HepG2 (cell line): ENCODE measurements at regions of chr13 and their contacts with region 1.

Region 1: DNA sequence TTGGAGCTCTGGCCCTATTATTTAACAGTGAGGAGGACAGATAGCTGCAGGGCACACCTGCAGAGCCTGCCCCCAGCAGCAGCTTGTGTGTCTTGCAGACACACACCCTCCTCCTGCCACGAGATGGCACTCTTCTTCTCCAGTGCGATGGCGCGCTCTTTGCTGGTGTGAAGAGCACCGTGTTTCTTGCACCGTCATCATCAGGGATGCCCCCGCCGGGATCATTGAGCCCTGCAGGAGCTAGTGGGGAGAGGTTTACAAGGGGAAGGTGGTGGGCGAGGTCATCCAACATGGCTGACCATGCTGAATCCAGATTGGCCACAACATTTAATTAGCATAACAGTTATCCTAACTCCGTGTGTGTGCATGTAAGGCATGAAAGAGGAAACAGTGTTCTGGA is 105.6 kb downstream of the RAB20 start:
- DNase-seq: peak; percentile 79
- ATAC-seq: peak; percentile 96
- H3K4me3 ChIP-seq: no peak overlapping the region
- H3K27ac ChIP-seq: no peak overlapping the region
- H3K4me1 ChIP-seq: peaks cover 41% of the 10 kb centered on the region
- H3K27me3 ChIP-seq: peaks cover 0 to 31% of the 10 kb centered on the region in 2 experiments; a peak in 3 of 5 replicates
- CTCF ChIP-seq: peak; percentile 97
- EP300 ChIP-seq: no peak
- POLR2A ChIP-seq: no peak
- RAD21 ChIP-seq: peak; percentile 92

Region 2: DNA sequence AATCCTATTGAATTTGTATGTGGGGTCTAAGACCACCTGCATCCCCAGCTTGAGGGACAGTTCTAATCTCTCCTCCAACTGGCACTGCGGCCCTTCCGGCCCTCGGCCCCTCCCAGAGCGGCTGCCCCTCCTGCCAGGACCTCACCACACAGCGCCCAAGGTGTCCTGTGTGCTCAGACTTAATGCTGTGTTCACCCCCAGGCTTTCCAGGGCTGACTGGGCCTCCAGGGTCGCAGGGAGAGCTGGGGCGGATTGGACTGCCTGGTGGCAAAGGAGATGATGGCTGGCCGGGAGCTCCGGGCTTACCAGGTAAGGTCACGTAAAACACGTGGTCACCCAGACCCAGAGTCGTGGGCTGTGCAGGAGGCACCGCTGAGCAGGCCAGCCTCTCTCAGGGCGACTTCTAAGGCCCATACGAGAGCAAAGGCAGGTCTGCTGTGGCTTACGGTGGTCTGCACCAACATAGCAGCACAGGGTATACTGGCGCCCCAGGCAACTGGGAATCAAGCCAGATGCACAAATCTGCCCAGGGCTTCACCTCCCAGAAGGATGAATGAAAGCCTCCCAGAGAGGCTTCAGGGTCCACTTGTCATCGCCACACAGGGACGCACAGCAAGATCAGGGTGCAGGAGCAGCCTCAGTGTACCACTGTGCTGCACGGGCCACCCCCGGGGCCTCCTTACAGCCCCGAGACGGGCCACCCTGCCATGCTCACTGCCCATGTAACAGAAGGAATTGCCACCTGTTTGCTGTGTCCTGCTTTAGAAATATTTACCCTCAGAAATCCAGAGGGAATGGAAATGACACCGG is 36.1 kb after region 1 on chr13:
- CTCF ChIA-PET with region 1: no interaction called
- POLR2A ChIA-PET with region 1: no interaction called
- in situ Hi-C with region 1: no loop called
- intact Hi-C with region 1: loop called (anchors 1 kb)
- DNase-seq: no peak
- ATAC-seq: no peak
- H3K4me3 ChIP-seq: no peak overlapping the region
- H3K27ac ChIP-seq: no peak overlapping the region
- H3K4me1 ChIP-seq: peaks cover 53% of the 10 kb centered on the region
- H3K27me3 ChIP-seq: no peaks in the 10 kb centered on the region
- CTCF ChIP-seq: no peak
- EP300 ChIP-seq: no peak
- POLR2A ChIP-seq: no peak
- RAD21 ChIP-seq: no peak

Region 3: GRCh38 chr13:110555601-110556223 is 99.8 kb after region 1 on chr13:
- CTCF ChIA-PET with region 1: no interaction called
- POLR2A ChIA-PET with region 1: no interaction called
- in situ Hi-C with region 1: loop called (anchors 5 kb)
- intact Hi-C with region 1: loop called (anchors 2 kb)
- DNase-seq: peak; percentile 84
- ATAC-seq: peak; percentile 90
- H3K4me3 ChIP-seq: peak overlapping the region in 1 of 3 experiments; percentile 31; a peak in 1 of 6 replicates
- H3K27ac ChIP-seq: peak overlapping the region; percentile 39
- H3K4me1 ChIP-seq: peaks cover 89% of the 10 kb centered on the region
- H3K27me3 ChIP-seq: no peaks in the 10 kb centered on the region
- CTCF ChIP-seq: no peak
- EP300 ChIP-seq: 0 out of 4 replicates have a peak, but pooled peaks of 1 of the 2 experiments have one; percentile 32
- POLR2A ChIP-seq: no peak
- RAD21 ChIP-seq: no peak

Region 4: GRCh38 chr13:110593430-110594130 is 137.6 kb after region 1 on chr13:
- CTCF ChIA-PET with region 1: interaction called, 5 read pairs
- POLR2A ChIA-PET with region 1: no interaction called
- in situ Hi-C with region 1: no loop called
- intact Hi-C with region 1: loop called (anchors 10 kb)
- DNase-seq: peak; percentile 65
- ATAC-seq: peak; percentile 89
- H3K4me3 ChIP-seq: no peak overlapping the region
- H3K27ac ChIP-seq: no peak overlapping the region
- H3K4me1 ChIP-seq: peaks cover 19% of the 10 kb centered on the region
- H3K27me3 ChIP-seq: no peaks in the 10 kb centered on the region
- CTCF ChIP-seq: peak; percentile 75
- EP300 ChIP-seq: no peak
- POLR2A ChIP-seq: no peak
- RAD21 ChIP-seq: peak; percentile 36; the same call in 1 of the 2 replicates

Region 5: GRCh38 chr13:110715395-110716235 is 259.7 kb after region 1 on chr13:
- CTCF ChIA-PET with region 1: no interaction called
- POLR2A ChIA-PET with region 1: no interaction called
- in situ Hi-C with region 1: no loop called
- intact Hi-C with region 1: loop called (anchors 10 kb)
- DNase-seq: peak; percentile 99
- ATAC-seq: peak; percentile 75
- H3K4me3 ChIP-seq: peak overlapping the region; percentile 76 to 98 (median 96)
- H3K27ac ChIP-seq: peak overlapping the region; percentile 89
- H3K4me1 ChIP-seq: peaks cover 16% of the 10 kb centered on the region
- H3K27me3 ChIP-seq: no peaks in the 10 kb centered on the region; a peak in 1 of 5 replicates
- CTCF ChIP-seq: peak; percentile 31; the same call in 1 of the 2 replicates
- EP300 ChIP-seq: no peak
- POLR2A ChIP-seq: no peak; a peak in 1 of 4 replicates
- RAD21 ChIP-seq: no peak; the same call in 1 of the 2 replicates